ENCODE measurements at regions of chr5 and their contacts with region 1.

Region 1: DNA sequence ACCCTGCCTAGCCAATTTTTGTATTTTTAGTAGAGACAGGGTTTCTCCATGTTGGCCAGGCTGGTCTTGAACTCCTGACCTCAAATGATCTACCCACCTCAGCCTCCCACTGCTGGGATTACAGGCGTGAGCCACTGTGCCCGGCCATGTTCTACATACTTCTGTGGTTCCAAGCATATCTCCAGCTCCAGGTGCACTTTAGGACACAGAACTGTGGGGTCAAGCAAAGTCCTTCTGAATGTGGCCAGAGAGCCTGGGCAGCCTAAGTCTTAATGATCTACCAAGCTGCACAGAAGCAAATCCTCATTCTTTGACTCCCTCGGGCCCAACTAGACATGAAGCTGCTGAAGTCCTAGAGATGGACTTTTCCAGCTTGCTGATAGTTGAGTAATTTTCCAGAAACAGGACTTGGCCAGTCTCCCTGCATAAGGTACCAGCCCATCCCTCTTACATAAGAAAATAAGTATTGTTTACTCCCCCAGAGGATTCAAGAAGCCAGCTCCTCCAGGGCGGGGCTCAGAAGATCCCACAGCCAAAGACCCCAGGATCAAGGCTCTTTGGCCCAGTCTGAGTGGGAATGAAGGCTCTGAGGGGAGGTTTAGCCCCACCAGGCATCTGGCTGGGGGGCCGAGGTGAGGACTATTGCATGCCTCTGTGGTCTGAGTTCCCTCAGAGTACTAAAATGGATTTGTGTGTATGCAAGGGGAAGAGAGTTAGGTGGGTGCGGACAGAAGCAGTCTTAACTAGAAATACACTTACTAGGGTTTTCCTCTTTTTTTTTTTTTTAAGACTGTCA is 8.7 kb downstream of the CLTB start:
- DNase-seq: no peak
- H3K4me3 ChIP-seq: no peak overlapping the region
- H3K27ac ChIP-seq: no peak overlapping the region
- H3K4me1 ChIP-seq: no peaks in the 10 kb centered on the region
- H3K27me3 ChIP-seq: no peaks in the 10 kb centered on the region
- CTCF ChIP-seq: no peak
- POLR2A ChIP-seq: no peak

Region 2: DNA sequence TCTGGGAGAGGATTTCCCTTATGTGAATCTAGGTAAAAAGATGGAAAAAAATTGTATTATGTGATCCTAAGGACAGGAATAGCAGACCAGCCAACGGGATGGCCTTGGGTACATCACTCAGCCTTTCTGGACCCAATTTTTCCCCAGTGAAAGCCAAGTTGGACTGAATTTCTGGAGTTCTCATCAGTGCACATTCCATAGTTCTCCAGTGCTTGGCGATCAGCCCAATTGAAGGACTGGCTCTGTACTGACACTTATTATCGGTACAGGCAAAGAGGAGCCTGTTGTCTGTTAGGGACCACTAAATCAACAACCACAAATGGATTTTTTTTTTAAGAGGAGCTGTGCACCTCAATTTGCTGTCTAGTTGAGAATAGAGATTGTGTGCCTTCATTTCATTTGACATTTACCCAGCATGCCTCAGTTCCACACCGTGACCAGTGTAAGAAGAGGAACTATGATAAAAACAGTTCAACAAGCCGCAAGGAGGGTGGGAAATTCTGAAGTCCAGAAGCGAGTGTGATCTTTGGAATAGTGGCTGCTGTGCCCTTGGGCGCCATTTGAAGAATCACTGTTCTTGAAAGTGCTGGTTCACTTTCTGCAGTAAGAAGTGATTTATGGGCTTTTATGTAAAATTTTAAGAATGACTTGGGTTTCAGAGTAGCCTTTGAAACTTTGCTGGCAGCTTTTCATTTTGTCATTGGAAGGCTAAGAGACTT is 34.4 kb before region 1 on chr5:
- intact Hi-C with region 1: loop called (anchors 1 kb)
- DNase-seq: no peak
- H3K4me3 ChIP-seq: no peak overlapping the region
- H3K27ac ChIP-seq: no peak overlapping the region
- H3K4me1 ChIP-seq: no peaks in the 10 kb centered on the region
- H3K27me3 ChIP-seq: no peaks in the 10 kb centered on the region
- CTCF ChIP-seq: no peak
- POLR2A ChIP-seq: no peak

Region 3: DNA sequence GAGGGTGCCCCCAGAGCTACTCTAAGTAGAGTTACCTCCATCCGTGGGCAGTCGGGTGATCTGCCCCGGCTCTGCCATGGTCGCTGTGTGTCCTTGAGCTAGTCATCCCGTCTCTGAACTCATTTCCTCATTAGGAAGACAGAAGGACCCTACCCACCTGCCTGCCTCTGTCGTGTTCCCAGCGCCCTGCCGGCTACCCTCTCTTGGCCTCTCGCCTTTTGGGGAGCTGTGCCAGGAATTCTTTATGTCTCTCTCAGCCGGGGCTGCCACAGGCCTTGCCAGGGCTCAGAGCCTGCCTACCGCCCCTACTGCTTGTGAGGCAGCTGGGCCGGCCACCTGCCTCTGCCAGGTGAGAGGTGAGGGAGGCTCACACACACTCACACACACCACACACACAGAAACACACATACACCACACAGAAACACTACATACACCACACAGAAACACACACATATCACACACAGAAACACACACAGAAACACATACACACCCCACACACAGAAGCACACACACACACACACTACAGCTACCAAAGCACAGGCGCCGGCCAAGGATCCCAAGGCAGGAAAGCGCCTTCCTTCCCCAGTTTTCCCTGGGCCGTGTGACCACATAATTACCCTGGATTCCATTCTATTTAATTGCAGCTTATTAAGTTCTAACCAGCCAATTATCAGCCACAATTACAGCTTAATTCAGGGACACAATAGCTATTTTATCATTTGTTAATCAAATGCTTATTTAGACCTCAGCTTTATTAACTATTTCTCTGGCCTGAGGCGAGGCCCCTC is 444.4 kb after region 1 on chr5:
- intact Hi-C with region 1: no loop called
- DNase-seq: no peak
- H3K4me3 ChIP-seq: no peak overlapping the region
- H3K27ac ChIP-seq: no peak overlapping the region
- H3K4me1 ChIP-seq: no peaks in the 10 kb centered on the region
- H3K27me3 ChIP-seq: peaks cover 0 to 61% of the 10 kb centered on the region in 2 donors
- CTCF ChIP-seq: no peak
- POLR2A ChIP-seq: no peak

Measured in breast epithelium (tissue), 4 donors.